Mammary epithelial cell (primary cell): ENCODE measurements at regions of chr1 and their contacts with region 1.

Region 1: DNA sequence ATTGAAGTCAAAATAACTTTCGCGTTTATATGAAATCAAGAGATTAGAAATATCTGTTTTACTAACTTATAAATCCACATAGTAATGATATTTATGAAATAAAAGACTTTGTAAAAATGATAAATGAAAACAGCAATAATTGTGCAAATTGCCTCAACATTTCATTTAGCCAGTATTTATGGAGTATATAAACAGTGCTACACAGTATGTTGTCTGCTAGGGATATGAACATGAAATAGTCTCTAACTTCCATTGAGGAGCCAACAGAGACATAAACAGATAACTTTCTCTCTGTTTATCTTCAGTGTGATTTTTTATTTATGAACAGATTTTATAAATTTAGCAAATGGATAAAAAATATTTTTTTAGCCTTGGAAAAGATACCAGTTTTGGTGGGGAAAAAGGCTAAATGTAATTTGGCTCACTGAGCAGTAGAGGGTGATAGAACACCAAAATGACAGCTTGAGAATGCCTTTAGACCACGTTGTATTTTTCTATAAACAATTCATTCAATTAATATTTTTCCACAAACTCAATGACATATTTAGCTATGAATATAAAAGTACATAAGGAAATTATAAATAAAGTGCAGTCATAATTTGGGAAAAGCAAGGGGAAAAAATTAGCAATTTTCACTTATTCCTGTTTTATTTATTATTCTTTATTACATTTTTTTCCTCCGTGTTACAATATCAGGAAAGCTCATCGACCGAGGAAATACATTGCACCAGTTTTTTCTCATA is 47.5 kb upstream of the EEIG2 start:
- DNase-seq: no peak
- H3K4me3 ChIP-seq: no peak overlapping the region
- H3K27ac ChIP-seq: no peak overlapping the region
- H3K4me1 ChIP-seq: no peaks in the 10 kb centered on the region
- H3K27me3 ChIP-seq: no peaks in the 10 kb centered on the region
- CTCF ChIP-seq: peak; percentile 68 to 81

Region 2: DNA sequence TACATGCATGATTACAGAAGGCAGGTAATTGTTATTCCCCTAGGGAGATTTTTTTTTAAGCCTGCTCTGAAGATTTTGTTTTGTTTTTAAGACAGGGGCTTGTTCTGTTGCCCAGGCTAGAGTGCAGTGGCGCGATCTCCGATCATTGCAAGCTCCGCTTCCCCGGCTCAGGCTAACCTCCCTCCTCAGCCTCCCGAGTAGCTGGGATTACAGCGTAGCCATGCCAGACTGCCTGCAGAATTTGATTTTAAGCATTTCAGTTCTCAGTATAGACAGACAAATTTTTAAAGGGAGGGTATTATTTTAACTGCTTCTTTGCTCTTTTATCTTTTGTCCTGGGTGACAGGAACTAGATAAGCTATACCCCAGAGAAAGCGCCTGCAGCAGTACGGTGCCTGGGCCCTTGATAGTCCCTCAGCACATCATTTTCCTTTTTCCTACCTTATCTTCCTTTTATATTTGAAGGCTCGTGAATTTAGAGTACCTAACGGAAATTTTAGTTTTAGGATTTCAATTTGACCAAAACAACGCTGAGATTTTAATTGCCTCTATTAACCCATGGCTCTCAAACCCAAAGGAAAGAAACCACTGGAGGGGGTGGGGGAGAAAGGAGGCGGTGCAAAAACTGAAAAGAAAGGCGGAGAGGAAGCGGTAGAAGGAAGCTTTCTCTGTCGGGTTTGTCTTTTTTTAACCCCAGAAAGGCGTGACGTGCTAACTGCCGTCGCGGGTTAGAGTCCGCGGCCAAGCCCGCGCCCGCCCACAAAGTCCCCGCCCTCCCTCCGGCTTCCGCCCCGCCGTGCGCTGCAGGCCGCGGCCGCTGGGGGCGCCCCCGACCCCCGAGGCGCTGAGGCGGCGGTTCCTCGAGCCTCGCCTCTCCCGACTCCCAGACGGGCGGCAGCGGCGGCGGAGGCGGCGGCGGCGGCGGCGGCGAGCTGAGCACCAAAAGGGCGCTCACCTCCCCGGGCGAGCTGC is 47.1 kb after region 1 on chr1 and contains the start of gene EEIG2:
- CTCF ChIA-PET with region 1: no interaction called
- dilution Hi-C with region 1: no loop called
- in situ Hi-C with region 1: no loop called
- intact Hi-C with region 1: loop called (anchors 1 kb)
- DNase-seq: peak; percentile 81
- H3K4me3 ChIP-seq: peak within 1 kb of the TSS; percentile 52 to 57 (median 53)
- H3K27ac ChIP-seq: peak within 1 kb of the TSS; percentile 25
- H3K4me1 ChIP-seq: peaks cover 22% of the 10 kb centered on the region
- H3K27me3 ChIP-seq: no peaks in the 10 kb centered on the region
- CTCF ChIP-seq: peak; percentile 34 to 58
- total RNA-seq, gene EEIG2: 4.5 to 10.0 TPM